PC-9 (cell line): ENCODE measurements at regions of chr12 and their contacts with region 1.

Region 1: GRCh38 chr12:47032644-47033043 is 46.8 kb upstream of the PCED1B start:
- DNase-seq: peak in 1 of 2 experiments; percentile 58
- H3K4me3 ChIP-seq: no peak overlapping the region
- H3K27ac ChIP-seq: peak overlapping the region; percentile 90
- H3K4me1 ChIP-seq: peaks cover 38% of the 10 kb centered on the region
- H3K27me3 ChIP-seq: no peaks in the 10 kb centered on the region
- CTCF ChIP-seq: peak; percentile 79

Region 2: GRCh38 chr12:46020768-46021167 is 1011.9 kb before region 1 on chr12:
- CTCF ChIA-PET with region 1: no interaction called
- POLR2A ChIA-PET with region 1: interaction called, 17 read pairs
- intact Hi-C with region 1: no loop called
- DNase-seq: no peak
- H3K4me3 ChIP-seq: no peak overlapping the region
- H3K27ac ChIP-seq: no peak overlapping the region
- H3K4me1 ChIP-seq: no peaks in the 10 kb centered on the region
- H3K27me3 ChIP-seq: no peaks in the 10 kb centered on the region
- CTCF ChIP-seq: no peak

Region 3: GRCh38 chr12:46965137-46965536 is 67.5 kb before region 1 on chr12:
- CTCF ChIA-PET with region 1: no interaction called
- POLR2A ChIA-PET with region 1: no interaction called
- intact Hi-C with region 1: no loop called
- DNase-seq: peak in 1 of 2 experiments; percentile 48
- H3K4me3 ChIP-seq: no peak overlapping the region
- H3K27ac ChIP-seq: peak overlapping the region; percentile 60
- H3K4me1 ChIP-seq: peaks cover 34% of the 10 kb centered on the region
- H3K27me3 ChIP-seq: no peaks in the 10 kb centered on the region
- CTCF ChIP-seq: no peak

Region 4: DNA sequence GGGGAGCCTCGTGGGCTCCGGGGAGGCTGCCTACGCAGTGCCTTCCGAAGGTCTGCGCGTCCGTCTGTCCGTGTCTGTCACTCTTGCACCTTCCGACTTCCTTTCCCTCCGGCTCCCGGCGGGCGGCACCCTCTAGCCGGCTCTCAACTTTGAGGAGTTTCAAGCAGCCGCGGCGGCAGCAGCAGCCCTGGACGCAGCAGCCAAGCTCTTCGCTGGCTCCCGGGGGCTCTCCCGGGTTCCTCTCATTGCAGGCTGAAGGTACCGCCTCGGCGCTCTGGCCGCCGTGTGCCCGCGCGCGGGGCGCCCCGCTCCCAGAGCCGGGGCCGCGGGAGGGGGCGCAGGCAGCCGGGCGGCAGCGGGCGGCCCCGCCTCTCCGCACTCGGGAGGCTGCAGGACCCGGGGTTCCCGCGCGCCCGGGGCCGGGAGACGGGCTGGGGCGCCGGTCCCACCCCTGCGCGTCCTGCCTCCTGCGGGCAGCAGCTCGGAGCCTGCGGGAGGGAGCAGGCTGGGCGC is 46.9 kb after region 1 on chr12 and contains the starts of genes AMIGO2 and PCED1B:
- CTCF ChIA-PET with region 1: interaction called, 5 read pairs
- POLR2A ChIA-PET with region 1: interaction called, 7 read pairs
- intact Hi-C with region 1: loop called (anchors 1 kb)
- DNase-seq: peak; percentile 46 to 58
- H3K4me3 ChIP-seq: peak within 1 kb of the TSS; percentile 96
- H3K27ac ChIP-seq: peak within 1 kb of the TSS; percentile 98
- H3K4me1 ChIP-seq: peaks cover 50% of the 10 kb centered on the region
- H3K27me3 ChIP-seq: no peaks in the 10 kb centered on the region
- CTCF ChIP-seq: peak; percentile 26; the same call in 1 of the 2 replicates
- total RNA-seq, gene AMIGO2: 41.9 and 46.3 TPM in 2 replicates
- total RNA-seq, gene PCED1B: 10.9 and 11.2 TPM in 2 replicates

Region 5: DNA sequence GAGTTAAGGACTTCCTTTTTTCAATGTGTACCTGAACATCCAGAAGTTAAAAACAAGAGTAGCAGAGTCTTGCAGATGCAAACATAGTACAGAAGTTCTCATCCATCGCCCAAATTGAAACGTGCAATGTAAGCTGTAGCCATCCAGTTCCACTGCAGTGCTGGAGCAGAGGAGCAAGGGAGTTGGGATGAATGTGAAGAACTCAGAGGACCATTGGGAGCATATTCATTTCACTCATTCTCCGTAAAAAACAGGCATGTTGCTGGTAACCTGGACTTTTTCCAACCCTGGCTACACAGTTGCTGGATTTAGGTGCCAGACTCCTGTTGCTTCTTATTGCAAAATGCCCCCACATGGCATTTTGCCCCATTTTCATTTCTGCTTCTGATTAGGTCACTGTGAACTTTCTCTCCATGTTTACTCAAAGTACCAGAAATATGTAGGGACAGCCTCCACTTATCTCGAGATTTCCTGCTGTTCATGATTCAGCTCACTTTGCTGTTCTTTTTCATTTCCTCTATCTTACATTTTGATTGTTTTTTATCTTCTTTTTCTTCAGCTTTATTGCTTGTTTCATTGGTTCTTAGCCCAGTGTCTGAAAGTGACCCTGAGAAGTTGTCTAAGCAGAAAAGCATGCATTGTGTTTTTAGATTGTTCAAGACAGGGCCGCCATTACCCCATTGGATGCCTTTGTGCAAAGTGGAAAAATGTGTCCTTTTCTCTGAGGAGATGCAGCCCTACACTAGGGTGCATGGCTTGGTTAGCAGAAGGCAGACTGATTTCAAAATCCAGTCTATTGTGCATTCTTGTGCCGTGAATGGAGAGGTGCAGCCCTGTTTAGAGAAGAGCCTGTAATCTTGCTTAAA is 156.2 kb after region 1 on chr12:
- CTCF ChIA-PET with region 1: no interaction called
- POLR2A ChIA-PET with region 1: no interaction called
- intact Hi-C with region 1: loop called (anchors 10 kb)
- DNase-seq: peak in 1 of 2 experiments; percentile 39
- H3K4me3 ChIP-seq: no peak overlapping the region
- H3K27ac ChIP-seq: peak overlapping the region; percentile 36; the same call in 1 of the 2 replicates
- H3K4me1 ChIP-seq: peaks cover 54% of the 10 kb centered on the region
- H3K27me3 ChIP-seq: no peaks in the 10 kb centered on the region
- CTCF ChIP-seq: no peak

Region 6: GRCh38 chr12:47307680-47308399 is 275.2 kb after region 1 on chr12:
- CTCF ChIA-PET with region 1: interaction called, 5 read pairs
- POLR2A ChIA-PET with region 1: no interaction called
- intact Hi-C with region 1: loop called (anchors 1 kb)
- DNase-seq: peak; percentile 55 to 56
- H3K4me3 ChIP-seq: no peak overlapping the region
- H3K27ac ChIP-seq: peak overlapping the region; percentile 24
- H3K4me1 ChIP-seq: peaks cover 5% of the 10 kb centered on the region; the same call in 1 of the 2 replicates
- H3K27me3 ChIP-seq: no peaks in the 10 kb centered on the region
- CTCF ChIP-seq: peak; percentile 74

Region 7: DNA sequence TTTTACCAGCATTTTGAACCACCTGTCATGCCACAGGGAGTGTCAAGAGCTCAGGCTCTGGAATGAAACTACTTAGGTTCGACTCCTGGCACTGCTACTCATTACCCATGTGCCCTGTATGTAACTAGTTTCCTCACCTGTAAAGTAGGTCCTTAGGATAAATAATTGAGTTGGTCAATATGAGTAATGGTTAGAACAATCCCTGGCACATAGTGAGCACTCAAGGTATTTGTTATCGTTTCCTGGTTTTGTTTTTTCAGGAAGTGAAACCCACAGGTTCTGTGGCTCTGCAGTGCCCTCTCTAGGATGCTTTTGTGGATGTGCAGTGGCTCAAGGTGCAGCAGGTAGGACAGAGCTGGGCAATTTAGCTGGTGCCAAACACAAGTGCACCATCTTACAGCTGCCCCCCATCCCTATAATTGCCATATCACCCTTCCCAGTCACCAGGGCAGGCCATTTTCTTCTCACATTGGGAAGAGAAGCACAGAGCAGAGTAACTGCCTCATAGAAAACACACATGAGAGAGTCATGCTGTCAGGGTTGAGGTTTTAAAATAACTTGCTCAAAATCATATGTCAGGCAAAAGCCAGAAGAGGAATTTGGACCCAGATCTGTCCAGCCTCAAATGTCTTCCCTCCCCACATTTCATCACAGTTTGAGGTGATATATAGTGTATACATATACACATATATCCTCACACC is 375.7 kb after region 1 on chr12:
- CTCF ChIA-PET with region 1: interaction called, 3 read pairs
- POLR2A ChIA-PET with region 1: no interaction called
- intact Hi-C with region 1: loop called (anchors 1 kb)
- DNase-seq: peak; percentile 49 to 72
- H3K4me3 ChIP-seq: no peak overlapping the region
- H3K27ac ChIP-seq: no peak overlapping the region
- H3K4me1 ChIP-seq: no peaks in the 10 kb centered on the region
- H3K27me3 ChIP-seq: no peaks in the 10 kb centered on the region
- CTCF ChIP-seq: peak; percentile 53

Region 8: DNA sequence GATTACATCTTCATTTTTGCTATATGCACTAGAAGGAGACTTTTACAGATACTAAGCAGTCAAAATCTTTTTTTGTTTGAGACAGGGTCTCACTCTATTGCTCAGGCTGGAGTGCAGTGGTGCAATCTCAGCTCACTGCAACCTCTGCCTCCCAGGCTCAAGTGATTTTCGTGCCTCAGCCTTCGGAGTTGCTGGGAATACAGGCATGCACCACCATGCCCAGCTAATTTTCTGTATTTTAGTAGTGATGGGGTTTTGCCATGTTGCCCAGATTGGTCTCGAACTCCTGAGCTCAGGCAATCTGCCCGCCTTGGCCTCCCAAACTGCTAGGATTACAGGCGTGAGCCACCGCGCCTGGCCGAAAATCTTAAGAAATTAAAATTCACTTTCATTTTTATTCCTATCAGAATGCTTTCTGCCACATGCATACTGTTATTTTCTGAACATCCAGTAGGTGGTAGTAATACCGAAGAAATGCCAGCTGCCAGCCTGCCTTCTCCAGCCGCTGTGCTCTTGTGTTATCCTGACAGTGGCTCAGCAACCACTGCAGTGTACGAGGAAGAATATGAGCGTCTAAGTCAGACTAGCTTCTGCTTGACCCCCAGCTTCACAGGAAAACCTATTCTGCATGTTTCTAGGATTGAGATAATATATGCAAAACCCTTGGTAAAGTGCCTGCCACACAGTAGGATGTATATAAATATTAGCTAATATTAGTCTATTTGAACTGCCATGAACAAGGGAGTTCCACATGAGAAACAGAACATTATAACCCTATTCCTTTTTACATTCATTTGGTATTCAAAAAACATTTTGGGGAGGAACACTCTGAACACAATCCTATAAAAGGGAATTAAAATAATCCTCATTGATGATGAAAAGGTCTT is 619.0 kb after region 1 on chr12:
- CTCF ChIA-PET with region 1: no interaction called
- POLR2A ChIA-PET with region 1: no interaction called
- intact Hi-C with region 1: loop called (anchors 5 kb)
- DNase-seq: peak; percentile 31 to 39
- H3K4me3 ChIP-seq: peak overlapping the region; percentile 30; the same call in 1 of the 2 replicates
- H3K27ac ChIP-seq: no peak overlapping the region
- H3K4me1 ChIP-seq: 0 out of 2 replicates have a peak, but pooled peaks cover 9% of the 10 kb centered on the region
- H3K27me3 ChIP-seq: no peaks in the 10 kb centered on the region
- CTCF ChIP-seq: peak; percentile 75